MCF 10A (cell line): ENCODE measurements at regions of chr17 and their contacts with region 1.

Region 1: DNA sequence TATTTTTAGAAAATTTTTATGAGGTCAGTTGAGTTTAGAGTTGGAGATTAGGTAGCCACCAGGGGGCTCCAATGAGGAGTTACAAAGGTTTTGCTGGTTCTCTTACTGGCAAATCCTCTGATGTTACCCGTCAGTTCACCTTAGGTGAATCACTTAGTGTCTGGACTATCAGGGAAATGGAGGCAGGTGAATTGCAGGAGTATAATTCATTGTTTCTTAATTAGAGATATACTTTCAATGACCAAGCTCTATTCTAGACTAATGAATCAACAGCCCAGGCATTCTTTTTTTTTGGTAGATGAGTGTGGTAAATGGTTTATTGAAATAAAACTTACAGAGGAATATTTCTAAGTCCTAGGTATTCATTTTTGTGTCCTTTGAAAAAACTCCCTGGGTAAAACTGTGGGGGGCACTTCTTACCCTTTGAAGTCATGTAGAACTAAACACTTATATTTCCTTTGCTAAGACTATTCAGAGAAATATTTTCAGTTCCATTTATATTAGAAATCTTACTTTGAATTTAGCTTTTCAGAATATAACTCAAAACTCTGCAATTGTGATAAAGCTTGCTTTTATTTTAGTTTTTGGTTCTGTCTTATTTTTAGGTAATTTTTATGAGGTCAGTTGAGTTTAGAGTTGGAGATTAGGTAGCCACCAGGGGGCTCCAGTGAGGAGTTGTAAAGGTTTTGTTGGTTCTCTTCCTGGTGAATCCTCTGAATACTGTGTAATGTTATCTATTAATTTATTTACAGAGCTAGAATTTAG is 17.7 kb downstream of the PSMD11 start:
- DNase-seq: peak; percentile 78
- H3K4me3 Mint-ChIP-seq: no peak overlapping the region
- H3K27ac Mint-ChIP-seq: no peak overlapping the region
- H3K4me1 Mint-ChIP-seq: peaks cover 6% of the 10 kb centered on the region
- H3K27me3 Mint-ChIP-seq: no peaks in the 10 kb centered on the region
- CTCF ChIP-seq: peak; percentile 53

Region 2: DNA sequence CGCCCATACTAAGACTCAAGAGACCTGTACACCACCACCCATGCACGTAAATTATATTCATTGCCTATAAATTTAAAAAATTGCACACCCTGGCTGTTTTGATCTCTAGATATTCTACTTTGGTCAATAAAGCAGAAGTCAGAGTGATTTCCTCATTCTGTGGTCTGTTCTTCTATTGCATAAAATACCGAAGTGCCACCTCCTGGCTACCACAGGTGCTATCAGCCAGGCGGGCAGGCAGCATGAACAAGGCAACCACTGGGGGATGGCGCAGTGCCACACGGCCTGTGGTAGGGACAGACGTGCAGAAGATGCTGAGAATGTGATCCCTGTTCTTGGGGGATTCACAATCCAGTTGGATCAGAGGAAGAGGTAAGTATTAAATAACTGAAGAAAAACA is 147.1 kb after region 1 on chr17:
- CTCF ChIA-PET with region 1: interaction called, 16 read pairs
- POLR2A ChIA-PET with region 1: interaction called, 3 read pairs
- intact Hi-C with region 1: loop called (anchors 1 kb)
- DNase-seq: peak; percentile 68
- H3K4me3 Mint-ChIP-seq: no peak overlapping the region
- H3K27ac Mint-ChIP-seq: no peak overlapping the region
- H3K4me1 Mint-ChIP-seq: peaks cover 9% of the 10 kb centered on the region
- H3K27me3 Mint-ChIP-seq: no peaks in the 10 kb centered on the region
- CTCF ChIP-seq: peak; percentile 45

Region 3: GRCh38 chr17:32709562-32709961 is 247.5 kb after region 1 on chr17:
- CTCF ChIA-PET with region 1: no interaction called
- POLR2A ChIA-PET with region 1: no interaction called
- intact Hi-C with region 1: no loop called
- DNase-seq: no peak
- H3K4me3 Mint-ChIP-seq: no peak overlapping the region
- H3K27ac Mint-ChIP-seq: no peak overlapping the region
- H3K4me1 Mint-ChIP-seq: no peaks in the 10 kb centered on the region
- H3K27me3 Mint-ChIP-seq: no peaks in the 10 kb centered on the region
- CTCF ChIP-seq: no peak

Region 4: DNA sequence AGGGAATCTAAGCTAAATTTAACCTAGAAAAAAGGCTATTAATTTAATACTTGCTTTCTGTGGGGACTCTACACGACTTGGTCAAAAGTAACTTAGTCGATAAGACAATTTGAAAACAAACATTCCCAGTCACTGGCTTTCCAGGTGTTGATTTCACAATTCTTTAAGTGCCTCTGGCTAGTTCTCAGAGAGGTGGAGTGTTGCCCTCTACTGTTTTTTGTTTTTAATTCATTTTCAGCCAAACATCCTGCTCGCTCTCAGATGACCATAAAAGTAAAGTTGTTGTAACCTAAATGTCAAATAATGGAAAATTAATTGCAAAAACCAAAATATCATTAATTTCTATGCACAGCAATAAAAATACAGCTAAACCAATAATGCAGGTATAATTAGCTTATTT is 307.8 kb after region 1 on chr17:
- CTCF ChIA-PET with region 1: interaction called, 53 read pairs
- POLR2A ChIA-PET with region 1: interaction called, 3 read pairs
- intact Hi-C with region 1: no loop called
- DNase-seq: peak; percentile 71
- H3K4me3 Mint-ChIP-seq: no peak overlapping the region
- H3K27ac Mint-ChIP-seq: no peak overlapping the region
- H3K4me1 Mint-ChIP-seq: no peaks in the 10 kb centered on the region
- H3K27me3 Mint-ChIP-seq: no peaks in the 10 kb centered on the region
- CTCF ChIP-seq: peak; percentile 49